CD4-positive, alpha-beta memory T cell (primary cell): ENCODE measurements at regions of chr11 and their contacts with region 1.

Region 1: DNA sequence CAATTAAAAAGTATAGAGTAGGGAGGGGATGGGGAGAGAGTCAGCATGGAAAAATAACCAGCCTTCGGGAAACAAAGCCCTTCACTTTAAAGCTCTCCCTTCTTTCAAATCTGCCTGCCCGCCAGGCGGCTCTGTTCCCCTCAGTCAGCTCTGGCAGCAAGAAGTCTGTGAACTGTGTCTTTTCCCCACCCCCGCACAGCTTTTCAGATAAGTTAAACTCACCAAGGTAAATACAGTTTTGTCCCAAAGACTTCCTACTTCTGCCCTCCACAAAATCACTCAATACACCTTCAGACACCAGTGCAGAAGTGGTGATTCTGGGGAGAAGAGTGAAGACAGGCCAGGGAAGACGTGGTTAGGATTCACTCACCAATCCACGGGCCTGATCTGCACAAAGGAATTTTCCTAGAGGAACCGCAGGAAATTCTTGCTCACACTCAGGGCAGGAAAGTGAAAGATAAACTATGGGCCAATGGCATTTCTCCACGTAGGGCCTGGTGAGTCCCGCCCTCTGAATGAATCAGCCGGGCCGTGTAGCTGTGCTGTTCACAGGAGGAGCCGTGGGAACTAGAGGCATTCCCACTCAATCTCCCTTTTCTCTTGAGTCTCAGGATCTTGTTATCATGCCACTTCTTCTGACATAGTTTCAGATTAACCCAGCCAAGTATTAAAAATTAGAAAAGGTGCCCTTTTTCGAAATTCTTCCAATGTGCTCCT is at the start of gene TRIM5:
- DNase-seq: peak; percentile 79 to 90 (median 81)
- H3K4me3 ChIP-seq: peak within 1 kb of the TSS; percentile 65 to 100
- H3K4me3 Mint-ChIP-seq: peak within 1 kb of the TSS; percentile 91 to 97 (median 95)
- H3K27ac ChIP-seq: peak within 1 kb of the TSS; percentile 83
- H3K27ac Mint-ChIP-seq: peak within 1 kb of the TSS; percentile 94 to 98 (median 97)
- H3K4me1 ChIP-seq: peaks cover 33% of the 10 kb centered on the region
- H3K4me1 Mint-ChIP-seq: peaks cover 40 to 69% (median 54%) of the 10 kb centered on the region in 4 donors
- H3K27me3 ChIP-seq: no peaks in the 10 kb centered on the region
- H3K27me3 Mint-ChIP-seq: no peaks in the 10 kb centered on the region
- total RNA-seq, gene TRIM5: 33.9 to 35.5 TPM

Region 2: DNA sequence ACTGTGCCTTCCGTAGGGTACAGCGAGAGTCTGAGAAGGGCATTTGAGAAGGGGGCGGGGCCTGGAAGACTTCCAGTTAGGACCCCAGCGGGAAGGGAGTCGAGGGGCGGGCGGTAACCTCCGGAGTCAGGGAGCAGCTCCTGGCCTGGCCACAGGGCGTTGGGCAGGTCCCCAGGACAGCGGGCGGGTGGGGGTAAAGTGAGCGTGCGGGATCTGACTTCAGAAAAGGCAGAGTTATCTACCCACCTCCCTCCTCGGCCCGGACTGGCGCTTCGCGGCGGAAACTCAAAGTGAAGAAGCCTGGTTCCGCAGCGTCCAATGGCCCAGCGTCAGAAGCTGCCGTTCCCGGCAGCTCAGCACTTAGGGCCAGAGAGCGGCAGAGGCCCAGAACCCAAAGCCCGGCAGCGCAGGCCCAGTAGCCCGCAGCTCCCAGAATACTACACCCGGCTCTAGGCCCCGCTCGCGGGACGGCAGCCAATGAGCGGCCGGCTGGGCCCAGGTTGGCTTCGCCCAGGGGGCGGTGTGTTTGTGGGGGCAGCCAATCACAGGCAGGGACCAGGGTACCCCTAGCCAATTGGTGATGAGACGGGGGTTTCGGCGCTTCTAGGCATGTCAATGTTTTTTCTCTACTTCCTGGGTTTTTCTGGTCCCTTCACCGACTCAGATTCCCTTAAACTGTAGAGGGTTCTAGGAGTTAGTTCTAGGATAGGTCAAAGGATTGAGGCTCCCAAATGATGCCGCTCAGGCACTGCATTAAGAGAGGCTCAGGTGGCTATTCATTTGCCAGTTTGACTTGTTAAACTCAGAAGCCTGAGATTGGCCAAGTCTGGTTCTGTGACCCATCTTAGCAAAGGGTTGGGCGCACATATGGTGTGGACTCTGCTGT is 1076.8 kb before region 1 on chr11 and contains the start of gene TRIM68:
- CTCF ChIA-PET with region 1: no interaction called
- POLR2A ChIA-PET with region 1: no interaction called
- intact Hi-C with region 1: loop called (anchors 5 kb)
- DNase-seq: peak; percentile 94 to 96 (median 94)
- H3K4me3 ChIP-seq: peak within 1 kb of the TSS; percentile 32 to 79
- H3K4me3 Mint-ChIP-seq: peak within 1 kb of the TSS; percentile 93 to 98 (median 96)
- H3K27ac ChIP-seq: peak within 1 kb of the TSS; percentile 82
- H3K27ac Mint-ChIP-seq: peak within 1 kb of the TSS; percentile 88 to 98 (median 97)
- H3K4me1 ChIP-seq: peaks cover 39% of the 10 kb centered on the region
- H3K4me1 Mint-ChIP-seq: peaks cover 35 to 64% (median 46%) of the 10 kb centered on the region in 4 donors
- H3K27me3 ChIP-seq: no peaks in the 10 kb centered on the region
- H3K27me3 Mint-ChIP-seq: no peaks in the 10 kb centered on the region
- total RNA-seq, gene TRIM68: 23.7 to 28.1 TPM

Region 3: GRCh38 chr11:5696210-5696609 is 11.4 kb after region 1 on chr11:
- CTCF ChIA-PET with region 1: interaction called, 63 read pairs
- POLR2A ChIA-PET with region 1: interaction called, 25 read pairs
- intact Hi-C with region 1: no loop called
- DNase-seq: no peak
- H3K4me3 ChIP-seq: no peak overlapping the region
- H3K4me3 Mint-ChIP-seq: peak overlapping the region in 4 of 8 donors; percentile 13 to 28 (median 20)
- H3K27ac ChIP-seq: peak overlapping the region; percentile 5
- H3K27ac Mint-ChIP-seq: peak overlapping the region in 6 of 7 donors; percentile 53 to 92 (median 74)
- H3K4me1 ChIP-seq: peaks cover 65% of the 10 kb centered on the region
- H3K4me1 Mint-ChIP-seq: peaks cover 39 to 73% (median 62%) of the 10 kb centered on the region in 4 donors
- H3K27me3 ChIP-seq: no peaks in the 10 kb centered on the region
- H3K27me3 Mint-ChIP-seq: no peaks in the 10 kb centered on the region

Region 4: DNA sequence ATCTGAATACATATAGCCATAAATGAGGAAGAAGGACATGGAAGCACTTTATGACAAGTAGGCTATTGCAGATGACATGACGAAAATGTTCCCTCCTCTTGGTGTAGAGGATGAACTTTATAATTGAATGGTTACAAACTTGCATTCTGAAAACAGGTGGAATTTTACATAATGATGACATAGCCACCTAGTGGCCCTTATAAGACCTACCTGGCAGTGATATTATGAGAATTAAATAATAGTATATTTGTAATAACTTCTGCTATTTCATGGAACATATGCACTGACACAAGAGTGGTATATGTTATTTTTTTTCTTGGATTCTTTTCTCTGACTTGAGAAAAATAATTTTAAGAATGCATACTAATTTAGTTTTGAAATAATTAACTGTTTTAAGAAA is 27.7 kb after region 1 on chr11:
- CTCF ChIA-PET with region 1: interaction called, 71 read pairs
- POLR2A ChIA-PET with region 1: interaction called, 10 read pairs
- intact Hi-C with region 1: loop called (anchors 1 kb)
- DNase-seq: peak in 1 of 5 donors; percentile 5
- H3K4me3 ChIP-seq: no peak overlapping the region
- H3K4me3 Mint-ChIP-seq: no peak overlapping the region
- H3K27ac ChIP-seq: no peak overlapping the region
- H3K27ac Mint-ChIP-seq: peak overlapping the region in 4 of 7 donors; percentile 18 to 44 (median 26)
- H3K4me1 ChIP-seq: no peaks in the 10 kb centered on the region
- H3K4me1 Mint-ChIP-seq: peaks cover 0 to 5% (median 5%) of the 10 kb centered on the region in 4 donors
- H3K27me3 ChIP-seq: no peaks in the 10 kb centered on the region
- H3K27me3 Mint-ChIP-seq: no peaks in the 10 kb centered on the region

Region 5: DNA sequence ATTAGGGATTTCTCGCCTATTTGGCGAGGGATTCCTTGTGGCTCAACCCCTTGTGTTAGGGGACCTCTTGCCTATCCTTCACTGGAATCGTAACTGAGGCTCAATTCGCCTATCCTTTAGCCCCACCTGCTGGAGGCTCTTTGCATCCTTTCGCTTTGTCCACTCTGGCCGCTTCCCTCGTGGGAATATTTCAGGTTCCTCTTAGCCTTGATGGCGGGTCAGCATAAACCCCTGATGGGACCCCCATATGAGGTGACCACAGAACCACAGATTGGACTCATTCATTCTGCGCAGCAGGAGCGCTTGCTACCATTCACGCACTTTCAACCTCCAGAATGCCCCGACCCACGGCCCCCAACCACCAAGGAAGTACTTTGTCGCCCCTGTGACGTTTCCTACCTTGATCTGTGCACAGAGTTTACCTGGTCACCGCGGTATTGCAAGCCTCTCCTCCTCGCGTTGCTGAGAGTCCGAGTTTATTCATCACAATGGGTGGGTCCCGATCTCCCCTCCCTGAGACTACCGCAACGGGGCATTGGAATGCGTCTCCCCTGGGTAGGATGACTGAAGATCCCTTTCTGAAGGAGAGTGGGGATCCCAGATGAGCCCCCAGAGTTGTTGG is 123.8 kb after region 1 on chr11 and contains the start of gene OR52N2:
- CTCF ChIA-PET with region 1: interaction called, 20 read pairs
- POLR2A ChIA-PET with region 1: interaction called, 3 read pairs
- intact Hi-C with region 1: loop called (anchors 1 kb)
- DNase-seq: peak; percentile 60 to 72 (median 66)
- H3K4me3 ChIP-seq: peak within 1 kb of the TSS; percentile 58 to 83
- H3K4me3 Mint-ChIP-seq: peak within 1 kb of the TSS; percentile 88 to 96 (median 90)
- H3K27ac ChIP-seq: no peak within 1 kb of the TSS
- H3K27ac Mint-ChIP-seq: peak within 1 kb of the TSS in 5 of 7 donors; percentile 6 to 48 (median 40)
- H3K4me1 ChIP-seq: peaks cover 8% of the 10 kb centered on the region
- H3K4me1 Mint-ChIP-seq: peaks cover 7 to 13% (median 12%) of the 10 kb centered on the region in 4 donors
- H3K27me3 ChIP-seq: no peaks in the 10 kb centered on the region
- H3K27me3 Mint-ChIP-seq: peaks cover 13 to 16% of the 10 kb centered on the region in 2 donors
- total RNA-seq, gene OR52N2: not detected

Region 6: DNA sequence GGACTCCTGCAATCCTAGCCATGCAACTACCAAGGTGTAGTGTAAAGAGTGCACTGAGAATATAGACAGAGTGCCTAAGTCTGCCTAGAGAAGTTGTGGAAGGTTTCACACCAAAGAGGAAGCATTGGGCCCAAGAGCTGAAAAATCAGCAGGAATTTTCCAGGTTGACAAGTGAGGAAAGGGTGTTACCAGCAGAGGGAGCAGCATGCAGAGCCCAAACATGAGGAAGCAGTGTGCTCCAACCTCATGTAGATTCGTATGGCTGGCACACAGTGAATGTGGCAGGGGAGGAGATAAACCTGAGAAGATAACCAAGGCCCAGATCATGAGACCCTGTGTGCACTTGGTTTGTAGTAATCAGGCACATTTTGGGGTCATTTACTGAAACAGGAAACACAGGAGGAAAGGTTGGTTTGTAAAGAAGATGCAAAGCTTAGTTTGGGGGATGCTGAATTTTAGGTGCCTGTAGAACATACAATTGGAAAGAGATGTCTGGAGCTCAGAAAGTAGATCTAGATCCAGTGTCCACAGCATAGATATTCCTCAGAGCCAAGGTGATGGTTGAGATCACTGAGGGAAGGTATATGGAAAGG is 754.3 kb after region 1 on chr11:
- CTCF ChIA-PET with region 1: no interaction called
- POLR2A ChIA-PET with region 1: no interaction called
- intact Hi-C with region 1: no loop called
- DNase-seq: peak in 4 of 5 donors; percentile 28 to 35 (median 29)
- H3K4me3 ChIP-seq: no peak overlapping the region
- H3K4me3 Mint-ChIP-seq: no peak overlapping the region
- H3K27ac ChIP-seq: no peak overlapping the region
- H3K27ac Mint-ChIP-seq: no peak overlapping the region
- H3K4me1 ChIP-seq: peaks cover 34% of the 10 kb centered on the region
- H3K4me1 Mint-ChIP-seq: no peaks in the 10 kb centered on the region
- H3K27me3 ChIP-seq: no peaks in the 10 kb centered on the region
- H3K27me3 Mint-ChIP-seq: no peaks in the 10 kb centered on the region

Region 7: DNA sequence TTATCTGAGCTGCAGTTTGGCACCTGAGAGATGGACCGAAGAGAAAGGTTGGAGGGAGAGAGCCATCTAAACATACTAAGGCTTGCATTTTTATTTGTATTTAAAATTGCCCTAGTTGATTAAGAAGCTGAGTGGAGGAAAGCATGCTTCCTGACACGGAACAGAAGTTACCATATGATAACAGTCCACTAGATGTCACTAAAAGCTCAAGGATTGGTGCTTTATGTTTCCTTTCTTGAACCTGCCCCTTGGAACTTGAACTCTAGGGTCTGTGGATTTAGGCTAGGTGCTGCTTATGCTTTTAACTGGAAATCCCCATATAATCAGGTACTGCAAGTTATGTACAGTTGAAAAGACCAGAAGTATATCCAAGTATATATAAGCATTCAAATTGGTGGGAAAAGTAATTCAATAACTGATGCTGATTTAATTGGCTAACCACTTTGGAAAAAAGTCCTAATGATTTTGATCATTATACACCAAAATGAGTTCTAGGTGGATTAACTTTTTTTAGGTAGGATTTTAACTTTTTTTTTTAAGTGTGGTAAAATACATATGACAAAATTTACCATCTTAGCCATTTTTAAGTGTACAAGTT is 1413.5 kb after region 1 on chr11:
- CTCF ChIA-PET with region 1: no interaction called
- POLR2A ChIA-PET with region 1: no interaction called
- intact Hi-C with region 1: no loop called
- DNase-seq: peak; percentile 32 to 47 (median 39)
- H3K4me3 ChIP-seq: no peak overlapping the region
- H3K4me3 Mint-ChIP-seq: no peak overlapping the region
- H3K27ac ChIP-seq: no peak overlapping the region
- H3K27ac Mint-ChIP-seq: no peak overlapping the region
- H3K4me1 ChIP-seq: no peaks in the 10 kb centered on the region
- H3K4me1 Mint-ChIP-seq: no peaks in the 10 kb centered on the region
- H3K27me3 ChIP-seq: no peaks in the 10 kb centered on the region
- H3K27me3 Mint-ChIP-seq: peaks cover 5 to 11% of the 10 kb centered on the region in 2 donors